Activated B cell treated with CpG ODN at 0.5 μM for 24 hours (primary cell): ENCODE measurements at regions of chr21 and their contacts with region 1.

Region 1: DNA sequence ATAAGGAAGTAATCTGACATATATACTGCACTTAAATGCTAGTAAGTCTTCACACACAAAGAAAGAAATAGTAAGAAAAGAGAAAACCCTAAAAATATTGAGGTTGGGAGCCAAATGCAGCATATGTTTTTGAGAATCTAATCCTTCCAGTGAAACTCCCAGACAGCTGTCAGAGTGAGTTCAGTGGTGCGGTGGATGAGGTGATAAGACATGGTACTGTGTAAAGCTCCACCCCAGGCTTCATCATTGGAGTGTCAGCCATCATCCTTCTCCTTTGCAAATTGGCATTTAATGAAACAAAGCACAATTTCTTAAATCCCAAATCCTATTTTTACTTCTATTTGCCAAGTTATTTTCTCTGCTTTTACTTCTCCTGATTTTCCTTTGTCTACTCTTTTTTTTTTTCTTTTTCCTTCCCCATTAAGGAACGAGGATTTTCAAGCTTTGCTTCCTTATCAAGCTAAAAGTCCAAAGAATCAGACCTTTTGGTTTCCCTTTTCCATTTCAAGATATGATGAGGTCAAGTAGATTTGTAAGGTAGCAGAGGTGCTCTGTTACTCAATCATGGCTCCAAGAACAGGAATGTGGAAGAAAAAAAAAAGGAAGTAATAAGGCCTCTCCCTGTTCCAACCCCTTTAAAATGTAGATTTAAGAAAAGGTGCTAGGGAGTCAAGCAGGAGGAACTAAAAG is 343.3 kb downstream of the SETD4 start:
- DNase-seq: no peak
- ATAC-seq: no peak
- H3K4me3 Mint-ChIP-seq: no peak overlapping the region
- H3K27ac Mint-ChIP-seq: no peak overlapping the region
- H3K4me1 Mint-ChIP-seq: no peaks in the 10 kb centered on the region
- H3K27me3 Mint-ChIP-seq: peaks cover 14% of the 10 kb centered on the region
- CTCF ChIP-seq: no peak

Region 2: GRCh38 chr21:35738347-35738961 is 21.4 kb after region 1 on chr21:
- CTCF ChIA-PET with region 1: no interaction called
- POLR2A ChIA-PET with region 1: no interaction called
- intact Hi-C with region 1: no loop called
- DNase-seq: no peak
- ATAC-seq: no peak
- H3K4me3 Mint-ChIP-seq: no peak overlapping the region
- H3K27ac Mint-ChIP-seq: no peak overlapping the region
- H3K4me1 Mint-ChIP-seq: no peaks in the 10 kb centered on the region
- H3K27me3 Mint-ChIP-seq: peaks cover 20% of the 10 kb centered on the region
- CTCF ChIP-seq: no peak

Region 3: GRCh38 chr21:35764586-35764985 is 47.6 kb after region 1 on chr21:
- CTCF ChIA-PET with region 1: no interaction called
- POLR2A ChIA-PET with region 1: no interaction called
- intact Hi-C with region 1: no loop called
- DNase-seq: no peak
- ATAC-seq: no peak
- H3K4me3 Mint-ChIP-seq: no peak overlapping the region
- H3K27ac Mint-ChIP-seq: no peak overlapping the region
- H3K4me1 Mint-ChIP-seq: no peaks in the 10 kb centered on the region
- H3K27me3 Mint-ChIP-seq: peaks cover 22% of the 10 kb centered on the region
- CTCF ChIP-seq: no peak

Region 4: DNA sequence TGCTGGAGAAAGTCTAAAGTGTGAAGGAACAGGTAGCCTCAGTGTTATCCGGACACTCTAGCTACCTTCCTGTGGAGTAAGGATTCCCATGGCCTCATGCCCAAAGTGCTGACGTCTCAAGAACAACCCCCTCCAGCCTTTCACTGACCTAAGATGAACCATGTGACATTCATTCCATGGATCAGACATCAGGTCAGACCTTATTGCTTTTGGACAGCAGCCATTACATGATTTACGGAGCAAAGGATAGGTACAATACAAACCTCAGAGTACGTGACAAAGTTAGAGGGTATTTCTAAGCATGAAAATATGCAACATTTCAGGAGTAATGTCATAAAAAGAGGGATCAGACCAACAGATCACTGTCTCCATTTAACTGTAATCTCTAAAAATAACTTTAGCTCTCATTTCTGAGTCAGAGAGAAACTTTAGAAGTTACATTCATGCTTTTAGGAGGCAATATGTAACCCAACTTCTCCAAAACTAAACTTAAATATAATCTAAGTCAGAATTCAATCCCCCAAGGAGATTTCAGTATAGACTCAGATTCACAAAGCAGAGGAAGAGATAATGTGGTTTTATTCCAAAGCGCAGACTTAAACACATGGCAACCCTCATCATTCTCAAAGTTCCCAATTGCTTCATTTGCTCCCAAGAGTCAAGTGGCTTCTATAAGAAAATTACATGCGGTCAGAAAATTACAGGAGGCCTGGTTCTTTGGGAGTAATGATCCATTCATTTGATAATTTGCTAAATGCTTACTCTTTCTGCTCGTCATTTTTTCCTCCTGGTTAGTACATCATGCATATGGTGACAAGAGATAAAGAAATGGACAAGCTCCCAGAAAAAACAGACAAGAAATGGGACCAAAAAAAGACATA is 62.9 kb after region 1 on chr21:
- CTCF ChIA-PET with region 1: no interaction called
- POLR2A ChIA-PET with region 1: no interaction called
- intact Hi-C with region 1: loop called (anchors 10 kb)
- DNase-seq: no peak
- ATAC-seq: no peak
- H3K4me3 Mint-ChIP-seq: no peak overlapping the region
- H3K27ac Mint-ChIP-seq: no peak overlapping the region
- H3K4me1 Mint-ChIP-seq: no peaks in the 10 kb centered on the region
- H3K27me3 Mint-ChIP-seq: peaks cover 19% of the 10 kb centered on the region
- CTCF ChIP-seq: no peak